Dorsolateral prefrontal cortex (tissue), 120 donors: ENCODE measurements at regions of chr13 and their contacts with region 1.

Region 1: GRCh38 chr13:21435710-21436151 is 23.4 kb downstream of the ZDHHC20 start:
- DNase-seq: peak in 2 of 10 donors; percentile 42 to 59
- H3K4me3 ChIP-seq: peak overlapping the region in 6 of 59 donors; percentile 3 to 37 (median 16)
- H3K27ac ChIP-seq: peak overlapping the region; percentile 11 to 99 (median 87)
- H3K27me3 ChIP-seq: no peaks in the 10 kb centered on the region
- CTCF ChIP-seq: no peak

Region 2: DNA sequence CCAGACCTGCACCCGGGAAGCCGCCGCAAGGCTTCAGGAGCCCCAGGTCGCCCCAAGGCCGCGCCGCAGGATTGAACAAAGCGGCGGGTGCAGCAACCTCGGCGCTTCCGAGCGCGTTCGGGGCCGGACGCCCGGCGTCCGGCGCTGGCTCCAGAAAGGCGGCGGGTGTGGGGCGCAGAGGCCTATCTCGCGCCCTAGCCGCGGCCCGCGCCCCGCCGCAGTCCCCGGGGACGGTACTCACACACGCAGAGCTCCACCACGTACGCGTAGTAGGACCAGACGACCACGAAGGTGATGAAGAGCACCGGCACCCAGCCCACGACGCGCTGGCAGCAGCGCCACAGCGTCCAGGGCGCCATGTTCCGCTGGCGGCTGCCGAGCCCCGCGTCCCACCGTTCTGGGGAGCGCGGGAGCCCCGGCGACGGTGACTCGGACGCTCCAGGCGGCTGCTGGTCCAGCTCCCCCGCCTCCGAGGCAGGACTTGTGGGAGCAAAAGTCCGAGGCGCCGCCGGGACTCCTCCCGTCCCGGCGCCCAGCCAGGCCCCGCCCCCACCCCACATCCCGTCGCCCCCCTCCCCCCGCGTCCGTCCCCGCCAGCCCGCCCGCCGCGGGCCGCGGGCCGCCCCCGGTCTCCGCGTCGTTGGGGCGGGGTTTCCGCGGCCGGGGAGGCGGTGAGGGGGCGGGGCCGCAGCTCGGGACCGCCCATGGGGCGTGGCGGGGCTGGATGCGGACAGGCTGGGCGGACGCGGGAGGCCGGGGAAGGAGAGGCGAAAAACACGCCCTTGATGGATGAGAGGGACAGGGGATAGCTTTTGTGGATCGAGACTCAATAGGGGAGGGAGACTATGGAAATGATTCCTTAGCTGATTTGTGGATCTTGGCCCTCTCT is 23.3 kb after region 1 on chr13 and contains the start of gene ZDHHC20:
- intact Hi-C with region 1: loop called in 1 of 2 experiments (anchors 2 kb)
- DNase-seq: peak; percentile 74 to 95 (median 88)
- H3K4me3 ChIP-seq: peak within 1 kb of the TSS; percentile 73 to 100 (median 97)
- H3K27ac ChIP-seq: peak within 1 kb of the TSS; percentile 50 to 98 (median 94)
- H3K27me3 ChIP-seq: no peaks in the 10 kb centered on the region
- CTCF ChIP-seq: peak in 12 of 56 donors; percentile 0 to 35 (median 13)
- total RNA-seq, gene ZDHHC20: 34.9 to 214 (median 72.5) TPM

Region 3: GRCh38 chr13:21567714-21568113 is 132.0 kb after region 1 on chr13:
- intact Hi-C with region 1: no loop called
- DNase-seq: no peak
- H3K4me3 ChIP-seq: no peak overlapping the region
- H3K27ac ChIP-seq: no peak overlapping the region
- H3K27me3 ChIP-seq: no peaks in the 10 kb centered on the region
- CTCF ChIP-seq: no peak